A673 (cell line): ENCODE measurements at regions of chr3 and their contacts with region 1.

Region 1: DNA sequence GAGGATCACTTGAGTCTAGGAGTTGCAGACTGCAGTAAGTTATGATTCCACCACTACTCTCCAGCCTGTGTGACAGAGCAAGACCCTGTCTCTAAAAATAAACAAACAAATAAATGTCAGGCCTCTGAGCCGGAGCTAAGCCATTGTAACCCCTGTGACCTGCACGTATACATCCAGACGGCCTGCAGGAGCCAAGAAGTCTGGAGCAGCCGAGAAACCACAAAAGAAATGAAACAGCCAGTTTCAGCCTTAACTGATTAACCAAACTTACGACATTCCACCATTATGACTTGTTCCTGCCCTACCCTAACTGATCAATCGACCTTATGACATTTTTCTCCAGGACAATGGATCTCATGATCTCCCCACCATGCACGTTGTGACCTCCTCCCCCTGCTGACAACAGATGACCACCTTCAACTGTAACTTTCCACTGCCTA is 32.5 kb upstream of the ZKSCAN7 start:
- DNase-seq: no peak
- H3K4me3 ChIP-seq: no peak overlapping the region
- H3K27ac ChIP-seq: no peak overlapping the region
- H3K4me1 ChIP-seq: no peaks in the 10 kb centered on the region
- H3K27me3 ChIP-seq: no peaks in the 10 kb centered on the region
- CTCF ChIP-seq: no peak

Region 2: GRCh38 chr3:43113671-43114070 is 1408.8 kb before region 1 on chr3:
- CTCF ChIA-PET with region 1: no interaction called
- POLR2A ChIA-PET with region 1: interaction called, 15 read pairs
- intact Hi-C with region 1: no loop called
- DNase-seq: no peak
- H3K4me3 ChIP-seq: no peak overlapping the region
- H3K27ac ChIP-seq: no peak overlapping the region
- H3K4me1 ChIP-seq: no peaks in the 10 kb centered on the region
- H3K27me3 ChIP-seq: no peaks in the 10 kb centered on the region
- CTCF ChIP-seq: no peak

Region 3: GRCh38 chr3:45367453-45367871 is 844.9 kb after region 1 on chr3:
- CTCF ChIA-PET with region 1: no interaction called
- POLR2A ChIA-PET with region 1: no interaction called
- intact Hi-C with region 1: no loop called
- DNase-seq: no peak
- H3K4me3 ChIP-seq: no peak overlapping the region
- H3K27ac ChIP-seq: no peak overlapping the region
- H3K4me1 ChIP-seq: no peaks in the 10 kb centered on the region
- H3K27me3 ChIP-seq: no peaks in the 10 kb centered on the region
- CTCF ChIP-seq: no peak